Activated B cell treated with CpG ODN at 0.5 μM for 24 hours (primary cell): ENCODE measurements at regions of chr4 and their contacts with region 1.

Region 1: GRCh38 chr4:25767877-25768725 is 94.7 kb downstream of the SEL1L3 start:
- DNase-seq: no peak
- ATAC-seq: no peak
- H3K4me3 Mint-ChIP-seq: no peak overlapping the region
- H3K27ac Mint-ChIP-seq: no peak overlapping the region
- H3K4me1 Mint-ChIP-seq: no peaks in the 10 kb centered on the region
- H3K27me3 Mint-ChIP-seq: no peaks in the 10 kb centered on the region
- CTCF ChIP-seq: no peak

Region 2: DNA sequence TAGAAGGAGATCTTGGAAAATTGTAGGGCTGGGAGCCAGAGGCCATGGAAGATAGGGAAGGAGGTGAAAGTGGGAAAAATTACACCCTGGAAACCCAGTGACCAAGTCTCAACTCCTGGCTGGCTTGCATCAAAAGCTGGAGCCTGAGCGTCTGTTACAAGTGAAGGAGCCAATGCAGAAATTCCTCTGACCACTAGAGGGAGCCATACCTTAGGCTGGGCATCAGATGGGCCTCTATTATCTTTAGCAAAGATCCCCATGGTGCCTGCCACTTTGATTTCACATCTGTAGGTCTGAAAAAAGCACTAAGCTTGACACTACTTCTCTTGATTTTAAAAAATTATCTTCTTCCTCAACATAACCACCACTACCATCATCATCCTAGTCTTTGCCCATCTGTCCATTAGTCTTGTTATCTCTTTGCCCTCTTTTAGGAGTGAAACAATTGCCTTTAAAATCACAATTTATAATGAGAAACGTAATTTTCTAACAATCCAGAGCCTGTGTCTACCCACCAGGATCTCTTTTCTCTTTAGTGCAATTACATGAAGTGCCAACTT is 328.1 kb before region 1 on chr4:
- CTCF ChIA-PET with region 1: interaction called, 12 read pairs
- POLR2A ChIA-PET with region 1: no interaction called
- intact Hi-C with region 1: no loop called
- DNase-seq: no peak
- ATAC-seq: peak; percentile 57
- H3K4me3 Mint-ChIP-seq: no peak overlapping the region
- H3K27ac Mint-ChIP-seq: no peak overlapping the region
- H3K4me1 Mint-ChIP-seq: no peaks in the 10 kb centered on the region
- H3K27me3 Mint-ChIP-seq: no peaks in the 10 kb centered on the region
- CTCF ChIP-seq: peak; percentile 22